Activated T-helper 1 cell treated with anti-CD3 and anti-CD28 coated beads, Interleukin-12 subunit alpha, Interleukin-12 subunit beta, Interleukin-2, Interleukin-4 antibody, amounts not matched to agents 30 ng/mL and 10 ng/mL and 1 ng/mL, durations not matched to agents 14 hours and 24 hours and 36 hours (primary cell): ENCODE measurements at regions of chr6 and their contacts with region 1.

Region 1: GRCh38 chr6:90285611-90286381 is 10.8 kb downstream of the BACH2 start:
- DNase-seq: peak; percentile 47
- H3K4me3 Mint-ChIP-seq: peak overlapping the region; percentile 79
- H3K27ac Mint-ChIP-seq: peak overlapping the region; percentile 97
- H3K4me1 Mint-ChIP-seq: peaks cover 89% of the 10 kb centered on the region
- H3K27me3 Mint-ChIP-seq: peaks cover 3% of the 10 kb centered on the region

Region 2: DNA sequence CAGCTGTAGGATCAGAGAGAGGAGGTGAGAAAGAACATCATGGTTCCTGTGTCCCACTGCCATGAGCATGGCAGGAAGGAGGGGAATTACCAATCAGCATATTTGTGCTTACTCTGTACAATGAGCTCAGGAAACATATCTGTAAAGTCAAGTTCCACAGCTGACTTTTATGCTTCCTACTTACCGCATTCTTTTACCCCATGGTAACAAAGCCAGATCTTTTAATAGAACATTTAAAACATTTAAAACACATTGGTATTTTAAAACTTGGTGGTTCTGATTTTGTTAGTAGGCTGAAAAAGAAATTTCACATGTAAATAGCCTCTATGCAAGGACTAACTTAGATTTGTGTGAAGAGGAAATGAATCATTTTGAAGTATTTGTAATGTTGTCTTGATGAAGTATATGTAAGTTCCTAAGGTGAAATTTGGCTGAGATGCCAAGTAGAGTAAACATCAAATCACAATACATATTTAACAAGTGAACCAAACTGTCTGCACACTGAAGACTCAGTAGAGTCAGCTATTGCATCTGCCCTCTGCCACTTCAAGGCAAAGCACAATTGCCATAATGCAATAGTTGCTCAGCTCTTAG is 276.8 kb before region 1 on chr6:
- intact Hi-C with region 1: loop called (anchors 2 kb)
- DNase-seq: no peak
- H3K4me3 Mint-ChIP-seq: peak overlapping the region; percentile 37
- H3K27ac Mint-ChIP-seq: peak overlapping the region; percentile 69
- H3K4me1 Mint-ChIP-seq: peaks cover 38% of the 10 kb centered on the region
- H3K27me3 Mint-ChIP-seq: no peaks in the 10 kb centered on the region

Region 3: GRCh38 chr6:90088009-90088408 is 197.8 kb before region 1 on chr6:
- intact Hi-C with region 1: no loop called
- DNase-seq: no peak
- H3K4me3 Mint-ChIP-seq: no peak overlapping the region
- H3K27ac Mint-ChIP-seq: peak overlapping the region; percentile 61
- H3K4me1 Mint-ChIP-seq: peaks cover 53% of the 10 kb centered on the region
- H3K27me3 Mint-ChIP-seq: no peaks in the 10 kb centered on the region

Region 4: DNA sequence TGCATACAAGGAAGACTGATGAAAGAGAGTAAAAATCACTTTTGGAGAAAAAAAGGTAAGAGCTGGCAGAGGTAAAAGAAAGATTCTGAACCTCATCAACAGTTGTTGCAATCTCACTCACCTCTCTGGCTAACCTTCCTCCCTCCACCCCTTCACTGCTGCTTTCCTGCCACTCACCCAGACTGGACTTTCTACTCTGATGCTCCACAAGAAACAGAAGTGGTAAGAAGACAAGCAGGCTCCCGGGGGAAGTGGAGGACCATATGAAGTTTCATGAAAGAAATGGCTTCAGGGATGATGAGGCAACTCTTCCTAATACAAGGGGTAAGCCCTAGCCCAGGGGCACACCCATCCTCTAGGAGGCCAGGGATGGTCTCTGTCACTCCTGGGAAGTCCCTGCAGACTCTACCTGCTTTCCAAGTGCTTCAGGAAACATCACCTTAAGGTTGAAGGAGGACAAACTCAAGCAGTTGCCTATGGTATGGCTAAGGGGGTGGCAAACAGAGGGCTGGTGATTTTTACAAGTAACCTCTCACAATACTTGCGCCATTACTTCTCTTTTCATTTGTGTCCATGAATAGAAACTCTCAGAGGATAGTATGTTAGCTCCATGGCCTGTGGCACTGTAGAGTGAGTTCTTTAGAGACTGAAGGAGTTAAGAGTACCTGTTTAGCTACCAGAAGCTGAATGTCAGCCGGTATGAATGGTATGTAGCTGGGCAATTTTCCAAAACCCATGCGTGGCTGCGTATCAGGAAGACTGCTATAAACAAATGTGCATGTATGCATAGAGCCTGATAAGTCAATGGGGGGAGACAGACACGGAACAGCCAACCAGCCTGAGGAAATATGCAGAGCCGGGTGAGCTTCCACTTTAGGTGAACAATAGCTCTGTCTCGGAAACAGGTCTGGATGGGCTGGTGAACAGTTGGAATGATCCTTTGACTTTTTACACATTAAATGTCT is 101.2 kb before region 1 on chr6:
- intact Hi-C with region 1: loop called (anchors 2 kb)
- DNase-seq: no peak
- H3K4me3 Mint-ChIP-seq: no peak overlapping the region
- H3K27ac Mint-ChIP-seq: no peak overlapping the region
- H3K4me1 Mint-ChIP-seq: peaks cover 55% of the 10 kb centered on the region
- H3K27me3 Mint-ChIP-seq: no peaks in the 10 kb centered on the region

Region 5: GRCh38 chr6:90226257-90226656 is 59.5 kb before region 1 on chr6:
- intact Hi-C with region 1: no loop called
- DNase-seq: no peak
- H3K4me3 Mint-ChIP-seq: no peak overlapping the region
- H3K27ac Mint-ChIP-seq: peak overlapping the region; percentile 29
- H3K4me1 Mint-ChIP-seq: peaks cover 52% of the 10 kb centered on the region
- H3K27me3 Mint-ChIP-seq: no peaks in the 10 kb centered on the region

Region 6: DNA sequence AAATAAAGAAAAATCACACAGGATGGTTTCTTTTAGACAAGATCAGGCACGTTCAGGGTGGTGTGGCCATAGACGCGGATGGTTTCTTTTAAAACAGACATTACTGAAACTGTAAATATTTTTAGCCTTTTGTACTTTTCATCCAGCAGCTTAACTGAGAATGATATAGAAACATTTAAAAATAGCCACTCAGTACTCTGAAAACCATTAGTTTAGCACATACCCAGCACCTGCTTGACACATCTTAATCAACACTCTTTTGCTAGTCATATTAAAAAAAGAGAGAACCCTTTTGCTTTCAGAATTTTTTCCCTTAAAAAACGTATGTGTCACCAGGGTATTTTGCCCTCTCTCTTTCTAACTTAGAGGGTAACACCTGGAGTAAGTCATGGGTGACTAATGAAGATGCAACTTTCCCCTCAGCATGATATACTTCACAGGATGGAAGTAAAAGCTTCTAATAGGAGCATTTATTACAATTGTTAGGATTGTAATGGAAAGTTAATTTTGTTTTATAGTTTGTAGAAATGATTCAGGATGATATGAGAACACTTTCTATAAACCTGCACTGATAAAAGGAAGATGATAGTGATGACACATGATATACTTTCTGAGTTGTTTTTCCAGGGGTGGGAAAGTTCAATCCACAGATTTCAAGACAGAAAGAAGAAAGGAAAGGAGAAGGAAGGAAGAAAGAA is 34.4 kb before region 1 on chr6:
- intact Hi-C with region 1: loop called (anchors 1 kb)
- DNase-seq: no peak
- H3K4me3 Mint-ChIP-seq: peak overlapping the region; percentile 34
- H3K27ac Mint-ChIP-seq: peak overlapping the region; percentile 90
- H3K4me1 Mint-ChIP-seq: peaks cover 84% of the 10 kb centered on the region
- H3K27me3 Mint-ChIP-seq: peaks cover 2% of the 10 kb centered on the region

Region 7: GRCh38 chr6:90393232-90393884 is 107.6 kb after region 1 on chr6:
- intact Hi-C with region 1: loop called (anchors 1 kb)
- DNase-seq: peak; percentile 65
- H3K4me3 Mint-ChIP-seq: no peak overlapping the region
- H3K27ac Mint-ChIP-seq: peak overlapping the region; percentile 32
- H3K4me1 Mint-ChIP-seq: peaks cover 68% of the 10 kb centered on the region
- H3K27me3 Mint-ChIP-seq: no peaks in the 10 kb centered on the region

Region 8: GRCh38 chr6:90472744-90473143 is 186.9 kb after region 1 on chr6:
- intact Hi-C with region 1: loop called (anchors 1 kb)
- DNase-seq: peak; percentile 52
- H3K4me3 Mint-ChIP-seq: peak overlapping the region; percentile 68
- H3K27ac Mint-ChIP-seq: peak overlapping the region; percentile 92
- H3K4me1 Mint-ChIP-seq: peaks cover 100% of the 10 kb centered on the region
- H3K27me3 Mint-ChIP-seq: no peaks in the 10 kb centered on the region